ENCODE measurements at regions of chr3 and their contacts with region 1.

Region 1: DNA sequence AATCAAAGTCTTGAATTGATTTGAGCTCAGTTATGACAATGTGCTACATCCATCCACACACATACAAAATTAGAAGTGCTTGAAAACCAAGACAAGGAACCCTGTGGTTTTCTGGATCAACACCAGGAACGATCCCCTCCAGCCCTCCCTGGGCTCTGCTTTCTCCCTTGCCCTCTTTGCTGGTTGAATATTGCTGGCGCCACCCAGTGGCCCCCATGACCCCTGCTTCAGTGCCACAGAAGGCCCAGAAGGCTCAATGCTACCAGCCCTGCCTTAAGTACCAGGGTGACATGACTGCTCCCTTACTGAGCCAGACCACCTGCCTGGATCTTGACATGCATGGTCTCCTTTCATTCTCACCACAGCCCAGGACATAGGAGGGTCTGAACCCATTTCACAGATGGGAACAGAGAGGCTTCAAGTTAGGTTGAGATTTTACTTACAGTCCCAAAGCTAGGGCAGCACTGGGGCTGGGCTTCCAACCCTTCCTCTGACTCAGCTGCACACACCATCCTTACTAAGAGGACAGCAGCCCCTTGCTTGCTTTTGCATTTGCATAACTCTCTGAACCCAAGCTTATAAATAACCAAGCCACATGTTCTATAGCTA is 15.0 kb downstream of the IL12A start:
- DNase-seq: peak; percentile 85
- H3K4me3 Mint-ChIP-seq: no peak overlapping the region
- H3K27ac Mint-ChIP-seq: no peak overlapping the region
- H3K4me1 Mint-ChIP-seq: no peaks in the 10 kb centered on the region
- H3K27me3 Mint-ChIP-seq: no peaks in the 10 kb centered on the region
- CTCF ChIP-seq: peak; percentile 91

Region 2: DNA sequence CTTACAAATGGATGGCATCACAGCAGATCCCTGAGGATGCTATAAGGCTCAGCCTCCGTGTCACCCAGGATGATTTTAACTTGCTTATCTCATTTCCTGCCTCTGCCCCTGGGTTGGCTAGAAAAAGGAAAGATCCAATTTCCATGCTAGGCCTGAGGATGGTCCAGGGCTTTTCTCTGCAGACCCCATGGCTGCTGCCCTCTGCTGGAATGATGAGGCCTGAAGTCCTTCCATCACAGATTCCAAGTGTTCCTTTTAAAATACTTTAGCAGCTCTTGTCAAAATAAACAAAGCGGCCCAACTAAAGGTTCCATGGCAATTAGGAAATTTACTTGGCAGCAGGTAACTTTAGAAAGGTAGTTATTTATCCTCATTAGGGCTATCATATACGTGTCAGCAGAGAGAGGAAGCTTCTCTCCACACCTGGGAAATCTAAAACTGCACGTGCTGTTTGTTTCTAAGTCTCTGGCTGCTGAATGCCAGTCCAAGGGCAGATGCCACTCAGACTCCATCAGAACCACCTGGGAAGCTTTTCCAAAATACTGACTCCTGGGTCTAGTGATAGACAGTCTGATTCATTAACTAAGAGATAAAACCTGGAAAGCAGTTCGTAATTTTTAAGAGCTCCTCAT is 416.9 kb before region 1 on chr3:
- CTCF ChIA-PET with region 1: no interaction called
- intact Hi-C with region 1: no loop called
- DNase-seq: peak; percentile 61
- H3K4me3 Mint-ChIP-seq: no peak overlapping the region
- H3K27ac Mint-ChIP-seq: no peak overlapping the region
- H3K4me1 Mint-ChIP-seq: peaks cover 9% of the 10 kb centered on the region
- H3K27me3 Mint-ChIP-seq: peaks cover 23% of the 10 kb centered on the region
- CTCF ChIP-seq: peak; percentile 80

Region 3: DNA sequence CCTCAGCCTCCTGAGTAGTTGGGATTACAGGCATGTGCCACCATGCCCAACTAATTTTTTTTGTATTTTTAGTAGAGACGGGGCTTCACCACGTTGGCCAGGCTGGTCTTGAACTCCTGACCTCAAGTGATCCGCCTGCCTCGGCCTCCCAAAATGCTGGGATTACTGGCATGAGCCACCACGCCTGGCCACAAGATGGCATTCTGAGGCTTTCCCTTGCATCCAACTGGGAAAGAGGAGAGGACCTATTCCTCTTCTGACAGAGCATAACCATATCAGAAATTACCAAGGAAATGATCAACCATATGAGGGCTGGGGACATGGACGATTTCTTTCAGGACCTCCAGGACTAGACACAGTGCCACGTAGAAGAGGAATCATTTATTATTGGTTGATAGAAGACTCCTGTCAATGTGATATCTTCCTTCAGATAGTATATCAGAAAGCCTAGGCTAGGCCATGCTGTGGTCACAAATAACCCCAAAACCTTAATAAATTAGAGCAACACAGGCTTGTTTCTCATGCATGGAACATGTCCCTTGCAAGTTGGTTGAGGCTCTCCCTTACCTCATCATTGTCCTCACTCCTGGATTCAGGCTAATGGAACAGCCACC is 387.3 kb before region 1 on chr3:
- CTCF ChIA-PET with region 1: no interaction called
- intact Hi-C with region 1: loop called (anchors 2 kb)
- DNase-seq: peak; percentile 81
- H3K4me3 Mint-ChIP-seq: no peak overlapping the region
- H3K27ac Mint-ChIP-seq: no peak overlapping the region
- H3K4me1 Mint-ChIP-seq: peaks cover 12% of the 10 kb centered on the region
- H3K27me3 Mint-ChIP-seq: no peaks in the 10 kb centered on the region
- CTCF ChIP-seq: peak; percentile 84

Region 4: DNA sequence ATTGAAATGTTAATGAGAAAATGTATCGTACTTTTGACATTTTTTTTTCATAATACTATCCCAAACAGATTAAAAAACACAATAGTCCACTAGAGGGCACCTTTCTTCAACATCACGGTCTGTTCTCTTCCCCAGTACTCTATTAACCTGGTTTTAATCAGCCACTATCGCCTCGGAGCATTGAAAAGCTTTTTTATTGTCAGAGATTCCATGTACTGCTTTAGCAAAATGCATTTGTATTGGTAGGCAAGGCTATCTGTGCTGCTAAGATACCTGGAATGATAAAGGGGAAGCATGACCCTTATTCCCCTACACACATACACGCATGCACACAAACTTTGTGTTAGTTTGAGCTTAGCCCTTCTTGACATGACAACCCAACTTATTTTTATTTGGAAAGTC is 175.1 kb before region 1 on chr3:
- CTCF ChIA-PET with region 1: interaction called, 6 read pairs
- intact Hi-C with region 1: loop called (anchors 1 kb)
- DNase-seq: no peak
- H3K4me3 Mint-ChIP-seq: no peak overlapping the region
- H3K27ac Mint-ChIP-seq: no peak overlapping the region
- H3K4me1 Mint-ChIP-seq: peaks cover 26% of the 10 kb centered on the region
- H3K27me3 Mint-ChIP-seq: no peaks in the 10 kb centered on the region
- CTCF ChIP-seq: peak; percentile 59

Region 5: DNA sequence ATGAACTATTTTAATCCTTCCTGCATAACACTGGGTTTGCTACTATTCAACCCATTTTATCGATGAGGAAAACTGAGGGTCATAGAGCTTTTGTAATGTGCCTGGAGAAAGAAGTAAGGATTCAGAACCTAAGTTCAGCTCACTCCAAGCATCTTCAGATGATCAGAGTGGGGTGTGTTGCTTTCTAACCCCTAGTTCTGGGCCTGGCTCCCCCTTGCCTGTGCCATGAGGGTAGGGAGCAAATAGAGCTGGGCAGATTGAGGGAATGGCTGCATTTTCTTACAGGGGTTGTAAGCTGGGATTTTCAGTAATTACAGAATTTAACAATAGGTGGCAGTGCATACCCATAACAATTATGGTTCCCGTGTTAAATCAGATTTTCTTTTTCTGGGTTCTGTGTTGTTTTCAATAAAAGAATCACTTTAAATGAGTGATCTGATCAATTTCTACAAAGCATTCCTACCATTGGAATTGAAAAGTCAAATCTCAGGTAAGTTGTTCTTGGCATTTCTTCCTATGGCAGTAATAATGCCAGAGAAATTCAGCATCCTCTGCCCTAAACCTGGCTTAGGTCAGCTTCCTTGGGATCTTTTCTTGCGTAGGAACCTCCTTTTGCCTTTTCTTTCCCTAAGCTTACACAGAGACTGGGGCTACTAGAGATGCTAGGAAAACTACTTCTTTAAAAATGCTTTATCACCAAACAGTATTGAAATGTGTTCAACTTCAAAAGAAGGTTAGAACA is 118.8 kb before region 1 on chr3:
- CTCF ChIA-PET with region 1: interaction called, 100 read pairs
- intact Hi-C with region 1: loop called (anchors 1 kb)
- DNase-seq: peak; percentile 17
- H3K4me3 Mint-ChIP-seq: no peak overlapping the region
- H3K27ac Mint-ChIP-seq: no peak overlapping the region
- H3K4me1 Mint-ChIP-seq: no peaks in the 10 kb centered on the region
- H3K27me3 Mint-ChIP-seq: no peaks in the 10 kb centered on the region
- CTCF ChIP-seq: peak; percentile 75

Region 6: GRCh38 chr3:159902546-159903314 is 100.9 kb before region 1 on chr3:
- CTCF ChIA-PET with region 1: no interaction called
- intact Hi-C with region 1: no loop called
- DNase-seq: no peak
- H3K4me3 Mint-ChIP-seq: no peak overlapping the region
- H3K27ac Mint-ChIP-seq: no peak overlapping the region
- H3K4me1 Mint-ChIP-seq: no peaks in the 10 kb centered on the region
- H3K27me3 Mint-ChIP-seq: no peaks in the 10 kb centered on the region
- CTCF ChIP-seq: no peak

Region 7: GRCh38 chr3:159929435-159930141 is 74.0 kb before region 1 on chr3:
- CTCF ChIA-PET with region 1: interaction called, 52 read pairs
- intact Hi-C with region 1: loop called (anchors 1 kb)
- DNase-seq: peak; percentile 49
- H3K4me3 Mint-ChIP-seq: no peak overlapping the region
- H3K27ac Mint-ChIP-seq: no peak overlapping the region
- H3K4me1 Mint-ChIP-seq: peaks cover 9% of the 10 kb centered on the region
- H3K27me3 Mint-ChIP-seq: no peaks in the 10 kb centered on the region
- CTCF ChIP-seq: no peak

Region 8: GRCh38 chr3:159988617-159989271 is 14.9 kb before region 1 on chr3 and contains the start of gene IL12A:
- CTCF ChIA-PET with region 1: interaction called, 14 read pairs
- intact Hi-C with region 1: no loop called
- DNase-seq: peak; percentile 94
- H3K4me3 Mint-ChIP-seq: peak within 1 kb of the TSS; percentile 94
- H3K27ac Mint-ChIP-seq: peak within 1 kb of the TSS; percentile 31
- H3K4me1 Mint-ChIP-seq: peaks cover 8% of the 10 kb centered on the region
- H3K27me3 Mint-ChIP-seq: no peaks in the 10 kb centered on the region
- CTCF ChIP-seq: peak; percentile 100
- total RNA-seq, gene IL12A: 1.0 and 3.6 TPM in 2 replicates

Measured in Calu3 (cell line).